ENCODE measurements at regions of chr14 and their contacts with region 1.

Region 1: DNA sequence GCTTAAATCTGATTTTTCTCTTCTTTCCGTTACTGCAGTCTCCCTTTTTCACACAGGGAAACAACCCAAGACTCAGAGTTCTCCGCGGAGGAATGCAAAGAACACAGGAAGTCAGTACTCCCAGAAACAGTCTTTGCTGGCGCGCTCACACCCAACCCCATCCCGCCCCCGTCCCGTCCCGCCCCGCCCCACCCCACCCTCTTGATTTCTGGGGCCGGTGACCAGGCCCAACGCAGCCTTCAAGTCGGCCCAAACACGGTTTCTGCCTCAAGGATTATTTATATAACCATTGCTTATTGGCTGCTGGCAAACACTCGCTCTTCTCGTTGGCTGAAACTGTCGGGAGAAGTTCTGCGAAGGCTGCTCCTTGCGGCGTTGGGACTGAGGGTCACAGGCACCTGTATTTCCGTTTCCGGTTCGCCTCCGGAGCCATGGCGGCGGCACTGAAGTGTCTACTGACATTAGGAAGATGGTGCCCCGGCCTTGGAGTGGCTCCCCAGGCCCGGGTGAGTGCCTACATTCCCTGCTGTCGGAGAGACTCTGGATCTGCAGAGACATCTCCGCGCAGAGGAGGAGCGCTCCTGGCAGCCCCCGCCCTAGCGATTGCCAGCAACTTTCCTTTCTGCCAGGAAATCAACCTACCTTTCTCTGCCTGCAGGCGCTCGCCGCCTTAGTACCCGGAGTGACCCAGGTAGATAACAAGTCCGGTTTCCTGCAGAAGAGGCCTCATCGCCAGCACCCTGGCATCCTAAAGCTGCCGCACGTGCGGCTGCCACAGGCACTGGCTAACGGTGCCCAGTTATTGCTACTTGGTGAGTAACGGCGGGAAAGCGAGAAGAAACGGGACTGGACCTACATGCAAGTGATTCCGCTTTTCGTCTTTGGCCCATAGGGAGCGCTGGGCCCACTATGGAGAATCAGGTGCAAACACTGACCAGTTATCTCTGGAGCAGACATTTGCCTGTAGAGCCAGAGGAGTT is at the start of gene METTL17:
- DNase-seq: peak; percentile 91
- CTCF ChIP-seq: peak; percentile 21

Region 2: GRCh38 chr14:20818861-20819260 is 171.0 kb before region 1 on chr14:
- CTCF ChIA-PET with region 1: no interaction called
- POLR2A ChIA-PET with region 1: no interaction called
- DNase-seq: no peak
- CTCF ChIP-seq: no peak

Region 3: GRCh38 chr14:21003788-21004346 is 14.0 kb after region 1 on chr14:
- CTCF ChIA-PET with region 1: interaction called, 13 read pairs
- POLR2A ChIA-PET with region 1: no interaction called
- DNase-seq: no peak
- CTCF ChIP-seq: no peak

Region 4: DNA sequence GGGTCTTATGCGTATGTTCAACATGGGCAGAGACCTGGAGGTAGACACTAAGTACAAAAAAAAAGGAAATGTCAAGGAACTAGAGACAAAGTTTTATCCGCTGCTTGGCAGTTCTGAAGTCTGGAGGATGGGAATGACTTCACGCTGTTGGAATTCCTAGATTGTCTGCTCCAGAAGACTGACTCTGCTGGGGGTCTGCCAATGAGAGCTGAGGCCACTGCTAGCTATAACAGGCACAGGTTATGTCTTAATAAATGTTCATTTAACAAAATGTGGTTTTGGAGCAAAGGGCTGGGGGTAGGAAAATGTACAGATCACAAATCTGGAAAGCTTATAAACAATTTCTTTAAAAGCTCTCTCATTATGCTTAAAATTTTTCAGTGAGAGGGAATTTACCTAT is 73.6 kb after region 1 on chr14:
- CTCF ChIA-PET with region 1: no interaction called
- POLR2A ChIA-PET with region 1: no interaction called
- DNase-seq: no peak
- CTCF ChIP-seq: no peak

Measured in GM10248 (cell line).